ENCODE measurements at regions of chr12 and their contacts with region 1.

Region 1: DNA sequence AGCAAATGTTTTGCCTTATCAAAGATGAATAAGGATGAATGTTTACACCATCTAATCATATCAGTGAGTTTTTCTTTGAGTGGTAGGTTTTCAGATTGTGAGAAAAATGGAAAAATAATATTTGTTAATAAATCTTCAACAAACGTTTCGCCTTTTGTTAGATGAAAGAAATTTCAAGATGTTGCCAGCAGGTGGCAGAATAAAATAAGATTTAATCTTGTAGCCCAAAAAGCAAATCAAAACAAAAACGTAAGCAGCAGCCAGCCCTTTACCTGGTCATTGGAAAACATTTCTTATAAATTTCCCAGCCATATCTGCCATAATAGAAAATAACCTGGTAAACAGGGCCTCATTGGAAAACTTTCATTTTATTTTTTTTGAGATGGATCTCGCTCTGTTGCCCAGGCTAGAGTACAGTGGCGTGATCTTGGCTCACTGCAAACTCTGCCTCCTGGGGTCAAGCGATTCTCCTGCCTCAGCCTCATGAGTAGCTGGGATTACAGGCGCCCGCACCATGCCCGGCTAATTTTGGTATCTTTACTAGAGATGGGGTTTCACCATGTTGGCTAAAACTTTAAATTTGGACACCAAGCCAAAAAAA is 15.4 kb upstream of the TMEM120B start:
- DNase-seq: peak in 1 of 10 donors; percentile 27
- H3K4me3 ChIP-seq: peak overlapping the region in 4 of 59 donors; percentile 12 to 24 (median 16)
- H3K27ac ChIP-seq: no peak overlapping the region
- H3K27me3 ChIP-seq: peaks cover 0 to 3% (median 0%) of the 10 kb centered on the region in 45 donors
- CTCF ChIP-seq: peak; percentile 51 to 91 (median 79)

Region 2: DNA sequence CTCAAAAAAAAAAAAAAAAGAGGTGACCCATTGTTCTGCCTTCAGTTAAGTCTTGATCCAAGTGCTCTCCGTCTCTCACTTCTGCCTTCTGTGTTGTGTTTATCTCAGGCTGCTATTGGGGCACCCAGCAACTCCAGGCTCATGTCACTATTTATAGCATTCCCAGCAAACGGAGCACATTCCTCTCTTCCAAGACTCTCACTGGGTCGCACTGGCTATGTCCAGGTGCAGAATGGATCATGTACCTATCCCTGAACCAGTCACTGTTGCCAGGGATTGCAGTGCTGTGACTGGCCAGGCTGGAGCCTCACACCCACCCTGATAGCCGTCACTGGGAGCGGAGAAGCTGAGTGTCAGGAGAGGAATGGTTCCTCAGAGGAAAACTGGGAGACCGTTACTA is 65.1 kb after region 1 on chr12:
- intact Hi-C with region 1: no loop called
- DNase-seq: no peak
- H3K4me3 ChIP-seq: no peak overlapping the region
- H3K27ac ChIP-seq: peak overlapping the region in 1 of 59 donors; percentile 3
- H3K27me3 ChIP-seq: no peaks in the 10 kb centered on the region
- CTCF ChIP-seq: no peak

Region 3: GRCh38 chr12:121773011-121773777 is 76.0 kb after region 1 on chr12:
- intact Hi-C with region 1: loop called (anchors 1 to 2 kb)
- DNase-seq: peak in 8 of 10 donors; percentile 39 to 77 (median 58)
- H3K4me3 ChIP-seq: no peak overlapping the region
- H3K27ac ChIP-seq: peak overlapping the region in 4 of 59 donors; percentile 22 to 59 (median 42)
- H3K27me3 ChIP-seq: no peaks in the 10 kb centered on the region
- CTCF ChIP-seq: peak; percentile 63 to 89 (median 78)

Region 4: GRCh38 chr12:121793838-121794533 is 96.8 kb after region 1 on chr12:
- intact Hi-C with region 1: loop called (anchors 1 to 5 kb)
- DNase-seq: peak; percentile 69 to 93 (median 86)
- H3K4me3 ChIP-seq: peak overlapping the region; percentile 32 to 76 (median 61)
- H3K27ac ChIP-seq: peak overlapping the region in 54 of 59 donors; percentile 9 to 100 (median 100)
- H3K27me3 ChIP-seq: no peaks in the 10 kb centered on the region
- CTCF ChIP-seq: peak in 55 of 56 donors; percentile 77 to 100 (median 98)

Measured in dorsolateral prefrontal cortex (tissue), 120 donors.